CD4-positive, alpha-beta T cell (primary cell): ENCODE measurements at regions of chr9 and their contacts with region 1.

Region 1: DNA sequence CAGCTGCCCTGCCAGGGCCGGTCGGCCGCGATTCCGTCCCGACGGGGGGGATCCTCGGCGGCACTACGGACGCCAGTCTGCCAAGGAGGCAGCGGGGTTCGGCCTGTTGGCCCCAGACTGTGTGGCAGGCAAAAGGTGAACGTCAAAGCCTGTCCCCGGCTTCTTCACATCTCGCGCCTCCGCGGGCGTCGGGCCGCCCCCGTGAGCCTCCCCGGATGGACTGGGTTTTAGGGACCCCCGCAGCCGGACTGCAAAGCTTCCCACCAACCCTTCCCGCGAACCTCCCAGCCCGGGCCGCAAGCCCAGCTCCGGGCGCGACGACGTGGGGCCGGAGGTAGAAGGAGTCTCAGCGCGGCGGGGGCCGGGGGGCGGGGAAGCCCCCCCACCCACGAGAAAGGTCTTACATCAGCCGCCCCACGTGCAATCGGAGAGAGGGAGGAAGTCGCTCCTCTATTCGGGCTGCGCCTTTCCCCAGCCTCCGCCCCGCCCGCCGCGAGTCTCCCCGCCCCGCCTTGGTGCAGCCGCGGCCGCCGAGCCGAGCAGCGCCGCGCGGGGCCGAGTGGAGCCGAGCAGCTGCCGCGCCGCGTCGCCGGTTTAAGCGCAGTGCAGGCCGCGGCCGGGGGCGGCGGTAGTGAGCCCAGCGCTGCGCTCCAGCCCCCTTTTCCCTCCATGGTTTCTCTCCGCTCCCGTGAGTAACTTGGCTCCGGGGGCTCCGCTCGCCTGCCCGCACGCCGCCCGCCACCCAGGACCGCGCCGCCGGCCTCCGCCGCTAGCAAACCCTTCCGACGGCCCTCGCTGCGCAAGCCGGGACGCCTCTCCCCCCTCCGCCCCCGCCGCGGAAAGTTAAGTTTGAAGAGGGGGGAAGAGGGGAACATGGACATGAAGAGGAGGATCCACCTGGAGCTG is at the start of gene ANP32B:
- DNase-seq: peak; percentile 87 to 98 (median 94)
- ATAC-seq: peak; percentile 82
- H3K4me3 ChIP-seq: peak within 1 kb of the TSS; percentile 78
- H3K4me3 Mint-ChIP-seq: peak within 1 kb of the TSS; percentile 93
- H3K27ac ChIP-seq: peak within 1 kb of the TSS; percentile 78 to 88
- H3K27ac Mint-ChIP-seq: peak within 1 kb of the TSS; percentile 89
- H3K4me1 ChIP-seq: peaks cover 50% of the 10 kb centered on the region
- H3K4me1 Mint-ChIP-seq: peaks cover 73% of the 10 kb centered on the region
- H3K27me3 ChIP-seq: no peaks in the 10 kb centered on the region
- H3K27me3 Mint-ChIP-seq: no peaks in the 10 kb centered on the region
- CTCF ChIP-seq: peak; percentile 67
- total RNA-seq, gene ANP32B: 178 to 192 TPM

Region 2: GRCh38 chr9:97840521-97840920 is 142.4 kb before region 1 on chr9:
- CTCF ChIA-PET with region 1: no interaction called
- POLR2A ChIA-PET with region 1: no interaction called
- intact Hi-C with region 1: no loop called
- DNase-seq: no peak
- ATAC-seq: no peak
- H3K4me3 ChIP-seq: no peak overlapping the region
- H3K4me3 Mint-ChIP-seq: no peak overlapping the region
- H3K27ac ChIP-seq: no peak overlapping the region
- H3K27ac Mint-ChIP-seq: no peak overlapping the region
- H3K4me1 ChIP-seq: no peaks in the 10 kb centered on the region
- H3K4me1 Mint-ChIP-seq: no peaks in the 10 kb centered on the region
- H3K27me3 ChIP-seq: peaks cover 9 to 45% of the 10 kb centered on the region in 2 experiments
- H3K27me3 Mint-ChIP-seq: peaks cover 90% of the 10 kb centered on the region
- CTCF ChIP-seq: no peak

Region 3: GRCh38 chr9:97900738-97901565 is 82.0 kb before region 1 on chr9:
- CTCF ChIA-PET with region 1: interaction called, 13 read pairs
- POLR2A ChIA-PET with region 1: interaction called, 9 read pairs
- intact Hi-C with region 1: loop called in 1 of 2 experiments (anchors 5 kb)
- DNase-seq: peak in 4 of 14 experiments; percentile 57 to 79 (median 70)
- ATAC-seq: no peak
- H3K4me3 ChIP-seq: no peak overlapping the region
- H3K4me3 Mint-ChIP-seq: peak overlapping the region; percentile 22
- H3K27ac ChIP-seq: peak overlapping the region in 1 of 2 donors; percentile 7
- H3K27ac Mint-ChIP-seq: peak overlapping the region; percentile 96
- H3K4me1 ChIP-seq: peaks cover 54% of the 10 kb centered on the region
- H3K4me1 Mint-ChIP-seq: peaks cover 71% of the 10 kb centered on the region
- H3K27me3 ChIP-seq: no peaks in the 10 kb centered on the region
- H3K27me3 Mint-ChIP-seq: no peaks in the 10 kb centered on the region
- CTCF ChIP-seq: peak; percentile 81

Region 4: DNA sequence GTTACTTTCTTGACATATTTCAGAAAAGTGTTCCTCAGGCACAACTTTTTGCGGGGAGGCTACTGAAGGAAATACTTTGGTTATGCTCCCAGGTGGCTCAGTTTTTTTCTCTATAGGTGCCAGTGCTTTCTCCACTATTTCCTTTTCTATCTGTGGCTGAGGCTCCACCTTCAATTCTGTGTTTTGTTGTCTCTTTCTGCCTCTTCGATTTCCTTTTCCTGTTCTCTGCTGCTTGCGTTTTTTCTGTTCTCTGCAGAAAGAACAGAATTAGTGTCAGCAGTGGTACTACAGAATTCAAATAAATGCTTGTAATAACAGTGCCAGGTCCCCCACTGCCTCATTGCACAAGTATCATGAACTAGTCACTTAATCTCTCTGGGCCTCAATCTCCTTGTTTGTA is 52.0 kb before region 1 on chr9:
- CTCF ChIA-PET with region 1: interaction called, 5 read pairs
- POLR2A ChIA-PET with region 1: interaction called, 17 read pairs
- intact Hi-C with region 1: loop called in 1 of 2 experiments (anchors 1 kb)
- DNase-seq: peak in 4 of 14 experiments; percentile 36 to 72 (median 45)
- ATAC-seq: peak; percentile 83
- H3K4me3 ChIP-seq: no peak overlapping the region
- H3K4me3 Mint-ChIP-seq: peak overlapping the region; percentile 46
- H3K27ac ChIP-seq: peak overlapping the region; percentile 62
- H3K27ac Mint-ChIP-seq: peak overlapping the region; percentile 86
- H3K4me1 ChIP-seq: peaks cover 34% of the 10 kb centered on the region
- H3K4me1 Mint-ChIP-seq: peaks cover 78% of the 10 kb centered on the region
- H3K27me3 ChIP-seq: no peaks in the 10 kb centered on the region
- H3K27me3 Mint-ChIP-seq: no peaks in the 10 kb centered on the region
- CTCF ChIP-seq: no peak

Region 5: GRCh38 chr9:97966493-97966892 is 16.4 kb before region 1 on chr9:
- CTCF ChIA-PET with region 1: interaction called, 4 read pairs
- POLR2A ChIA-PET with region 1: interaction called, 22 read pairs
- intact Hi-C with region 1: no loop called
- DNase-seq: no peak
- ATAC-seq: no peak
- H3K4me3 ChIP-seq: no peak overlapping the region
- H3K4me3 Mint-ChIP-seq: no peak overlapping the region
- H3K27ac ChIP-seq: no peak overlapping the region
- H3K27ac Mint-ChIP-seq: no peak overlapping the region
- H3K4me1 ChIP-seq: no peaks in the 10 kb centered on the region
- H3K4me1 Mint-ChIP-seq: peaks cover 11% of the 10 kb centered on the region
- H3K27me3 ChIP-seq: no peaks in the 10 kb centered on the region
- H3K27me3 Mint-ChIP-seq: peaks cover 4% of the 10 kb centered on the region
- CTCF ChIP-seq: no peak

Region 6: DNA sequence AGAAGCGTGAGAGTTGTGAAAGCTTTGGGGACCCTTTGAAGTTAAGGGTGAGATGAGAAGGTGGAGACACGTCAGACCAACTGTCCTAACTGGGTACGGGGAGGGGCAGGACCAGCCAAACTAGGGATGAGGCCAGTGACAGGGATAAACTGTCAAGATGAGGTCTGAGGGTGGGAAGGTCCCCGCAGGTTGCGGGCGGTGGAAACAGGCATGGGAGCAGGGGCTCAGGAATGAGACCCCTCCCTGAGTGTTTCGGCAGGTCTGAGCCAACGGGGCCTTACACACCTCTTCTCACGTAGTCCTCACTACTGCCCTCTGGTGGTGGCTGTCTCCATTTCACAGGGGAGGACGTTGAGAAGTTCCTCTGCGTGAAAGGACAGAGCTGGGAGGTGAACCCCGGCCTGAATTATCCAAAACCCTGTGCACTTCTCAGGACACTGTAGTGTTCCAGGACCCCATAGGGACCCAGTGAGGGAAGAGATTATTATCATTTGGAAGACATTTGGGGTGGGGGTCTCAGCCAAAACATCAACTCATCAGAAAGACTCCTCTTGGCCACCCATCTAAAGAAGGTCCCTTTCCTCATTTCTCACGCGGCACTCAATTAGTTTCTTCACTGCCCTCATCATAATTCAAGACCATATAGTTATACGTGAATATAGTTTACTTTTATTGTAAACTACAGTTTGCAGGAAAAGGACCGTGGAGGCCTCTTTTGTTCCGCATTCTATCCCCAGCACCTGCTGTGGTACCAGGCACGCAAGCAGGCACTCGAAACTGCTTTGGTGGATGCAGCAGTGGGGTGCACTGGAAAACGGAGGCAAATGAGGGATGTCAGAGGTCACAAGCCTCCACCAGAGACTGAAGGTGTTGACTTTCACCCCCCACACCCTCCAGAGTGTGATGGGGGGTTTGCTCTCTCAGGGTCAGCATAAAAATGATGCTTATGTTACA is 51.9 kb after region 1 on chr9:
- CTCF ChIA-PET with region 1: interaction called, 13 read pairs
- POLR2A ChIA-PET with region 1: interaction called, 7 read pairs
- intact Hi-C with region 1: loop called (anchors 2 to 5 kb)
- DNase-seq: peak; percentile 82 to 97 (median 92)
- ATAC-seq: peak; percentile 99
- H3K4me3 ChIP-seq: no peak overlapping the region
- H3K4me3 Mint-ChIP-seq: no peak overlapping the region
- H3K27ac ChIP-seq: no peak overlapping the region
- H3K27ac Mint-ChIP-seq: no peak overlapping the region
- H3K4me1 ChIP-seq: peaks cover 6% of the 10 kb centered on the region
- H3K4me1 Mint-ChIP-seq: peaks cover 5% of the 10 kb centered on the region
- H3K27me3 ChIP-seq: no peaks in the 10 kb centered on the region
- H3K27me3 Mint-ChIP-seq: no peaks in the 10 kb centered on the region
- CTCF ChIP-seq: peak; percentile 86

Region 7: DNA sequence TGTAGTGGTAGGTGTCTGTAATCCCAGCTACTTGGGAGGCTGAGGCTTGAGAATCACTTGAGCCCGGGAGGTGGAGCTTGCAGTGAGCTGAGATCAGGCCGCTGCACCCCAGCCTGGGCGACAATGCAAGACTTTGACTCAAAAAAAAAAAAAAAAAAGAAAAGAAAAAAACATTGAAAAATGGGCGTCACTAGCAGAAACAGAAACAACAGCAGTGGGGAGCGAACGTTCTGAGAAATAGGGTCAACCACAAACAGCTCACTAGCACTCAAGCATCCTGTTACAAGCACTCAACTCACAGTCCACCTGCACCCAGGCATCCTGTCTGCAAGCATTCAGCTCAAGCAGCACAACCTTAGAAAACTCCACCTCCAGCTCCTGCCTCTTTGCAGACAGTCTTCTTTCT is 118.9 kb after region 1 on chr9:
- CTCF ChIA-PET with region 1: interaction called, 5 read pairs
- POLR2A ChIA-PET with region 1: interaction called, 5 read pairs
- intact Hi-C with region 1: loop called in 1 of 2 experiments (anchors 10 kb)
- DNase-seq: peak; percentile 63 to 96 (median 80)
- ATAC-seq: peak; percentile 94
- H3K4me3 ChIP-seq: peak overlapping the region; percentile 34
- H3K4me3 Mint-ChIP-seq: peak overlapping the region; percentile 71
- H3K27ac ChIP-seq: peak overlapping the region; percentile 74 to 79
- H3K27ac Mint-ChIP-seq: peak overlapping the region; percentile 91
- H3K4me1 ChIP-seq: peaks cover 95% of the 10 kb centered on the region
- H3K4me1 Mint-ChIP-seq: peaks cover 84% of the 10 kb centered on the region
- H3K27me3 ChIP-seq: no peaks in the 10 kb centered on the region
- H3K27me3 Mint-ChIP-seq: no peaks in the 10 kb centered on the region
- CTCF ChIP-seq: no peak

Region 8: DNA sequence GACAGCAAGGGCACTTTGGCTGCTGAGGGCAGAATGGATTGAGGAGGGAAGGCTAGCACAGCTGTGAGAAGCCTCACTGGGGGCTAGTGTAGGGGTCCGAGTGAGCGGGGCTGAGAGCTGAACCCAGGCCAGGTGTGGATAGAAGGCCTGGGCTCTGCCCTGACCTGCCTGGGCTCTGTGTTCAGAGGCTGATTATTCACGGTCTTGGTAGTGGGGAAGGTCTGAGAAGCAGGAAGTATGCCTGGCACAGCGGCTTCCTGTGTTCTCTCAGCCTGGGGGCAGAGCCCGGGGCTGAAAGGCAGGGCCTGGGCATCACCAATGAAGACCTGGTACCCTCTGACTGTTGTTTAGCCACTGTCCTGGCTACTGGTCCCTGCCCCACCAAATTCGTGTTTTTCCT is 408.9 kb after region 1 on chr9:
- CTCF ChIA-PET with region 1: no interaction called
- POLR2A ChIA-PET with region 1: no interaction called
- intact Hi-C with region 1: no loop called
- DNase-seq: peak in 5 of 14 experiments; percentile 2 to 16 (median 10)
- ATAC-seq: no peak
- H3K4me3 ChIP-seq: no peak overlapping the region
- H3K4me3 Mint-ChIP-seq: no peak overlapping the region
- H3K27ac ChIP-seq: no peak overlapping the region
- H3K27ac Mint-ChIP-seq: peak overlapping the region; percentile 66
- H3K4me1 ChIP-seq: peaks cover 10% of the 10 kb centered on the region
- H3K4me1 Mint-ChIP-seq: peaks cover 13% of the 10 kb centered on the region
- H3K27me3 ChIP-seq: peaks cover 0 to 3% of the 10 kb centered on the region in 2 experiments
- H3K27me3 Mint-ChIP-seq: peaks cover 12% of the 10 kb centered on the region
- CTCF ChIP-seq: no peak

Region 9: GRCh38 chr9:99104459-99105151 is 1121.7 kb after region 1 on chr9 and contains the start of gene TGFBR1:
- CTCF ChIA-PET with region 1: no interaction called
- POLR2A ChIA-PET with region 1: no interaction called
- intact Hi-C with region 1: loop called in 1 of 2 experiments (anchors 10 kb)
- DNase-seq: peak; percentile 81 to 96 (median 88)
- ATAC-seq: peak; percentile 83
- H3K4me3 ChIP-seq: peak within 1 kb of the TSS; percentile 81
- H3K4me3 Mint-ChIP-seq: peak within 1 kb of the TSS; percentile 93
- H3K27ac ChIP-seq: peak within 1 kb of the TSS; percentile 65 to 74
- H3K27ac Mint-ChIP-seq: peak within 1 kb of the TSS; percentile 93
- H3K4me1 ChIP-seq: peaks cover 42% of the 10 kb centered on the region
- H3K4me1 Mint-ChIP-seq: peaks cover 60% of the 10 kb centered on the region
- H3K27me3 ChIP-seq: no peaks in the 10 kb centered on the region
- H3K27me3 Mint-ChIP-seq: no peaks in the 10 kb centered on the region
- CTCF ChIP-seq: no peak
- total RNA-seq, gene TGFBR1: 12.9 to 14.6 TPM